GM10248 (cell line): ENCODE measurements at regions of chr1 and their contacts with region 1.

Region 1: GRCh38 chr1:39919545-39919944 is 17.8 kb upstream of the MYCL start:
- DNase-seq: peak; percentile 87
- CTCF ChIP-seq: peak; percentile 58

Region 2: GRCh38 chr1:39816415-39817090 is 103.0 kb before region 1 on chr1:
- CTCF ChIA-PET with region 1: interaction called, 13 read pairs
- POLR2A ChIA-PET with region 1: no interaction called
- DNase-seq: peak; percentile 79
- CTCF ChIP-seq: peak; percentile 67

Region 3: DNA sequence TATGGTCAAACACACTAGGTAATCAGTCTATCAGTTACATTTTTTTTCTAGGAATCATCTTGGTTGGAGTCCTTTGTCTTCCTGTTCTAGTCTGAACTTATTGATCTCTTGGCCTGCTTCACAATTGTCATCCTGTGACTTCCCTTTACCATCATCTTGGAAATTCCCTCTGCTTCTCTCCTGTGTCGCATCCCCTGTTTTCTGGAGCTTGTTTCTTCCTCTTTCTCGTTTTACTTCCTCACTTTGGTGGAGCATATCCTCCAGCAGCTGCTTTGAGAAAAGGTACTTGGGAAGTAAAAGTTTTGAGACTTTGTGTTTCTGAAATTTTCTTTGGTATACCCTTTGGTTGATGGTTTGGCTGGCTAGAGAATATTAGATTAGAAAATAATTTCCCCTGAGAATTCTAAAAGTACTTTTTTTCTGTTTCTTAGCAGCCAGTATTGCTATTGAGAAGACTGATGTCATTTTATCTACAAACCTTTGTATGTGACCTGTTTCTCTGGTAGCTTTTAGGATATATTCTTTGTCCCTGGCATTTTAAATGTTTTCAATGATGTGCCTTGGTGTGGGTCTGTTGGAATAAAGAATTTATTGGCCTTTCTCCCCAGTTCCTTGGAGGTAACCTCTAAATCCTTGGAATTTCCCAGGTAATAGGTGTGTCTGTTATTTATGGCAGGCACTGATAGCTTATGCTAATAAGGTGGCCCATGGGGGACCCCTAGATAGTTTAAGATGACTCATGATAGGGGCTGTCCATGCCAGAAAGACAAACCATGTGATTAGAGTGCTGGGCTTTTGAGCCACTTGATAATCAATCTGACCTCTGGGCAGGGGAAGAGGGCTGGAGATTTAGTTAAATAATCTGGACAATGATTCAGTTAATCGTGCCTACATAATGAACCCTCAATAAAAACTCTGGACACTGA is 11.8 kb before region 1 on chr1:
- CTCF ChIA-PET with region 1: interaction called, 87 read pairs
- POLR2A ChIA-PET with region 1: no interaction called
- DNase-seq: no peak
- CTCF ChIP-seq: no peak

Region 4: DNA sequence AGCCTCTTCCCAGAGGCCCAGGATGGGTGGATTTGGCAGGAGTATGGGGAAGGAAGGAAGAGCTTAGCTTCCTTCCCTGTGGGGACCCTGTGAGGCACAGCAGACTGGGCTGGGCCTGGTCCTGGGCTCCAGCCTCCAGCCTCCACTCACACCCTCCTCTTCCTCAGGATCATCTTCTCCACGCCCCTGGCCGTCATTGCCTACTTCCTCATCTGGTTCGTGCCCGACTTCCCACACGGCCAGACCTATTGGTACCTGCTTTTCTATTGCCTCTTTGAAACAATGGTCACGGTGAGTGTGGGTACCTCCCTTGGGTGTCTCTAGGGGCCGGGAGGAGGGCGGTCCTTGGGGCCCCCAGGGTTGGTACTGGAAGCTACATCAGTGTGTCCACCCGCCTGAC is 45.5 kb after region 1 on chr1:
- CTCF ChIA-PET with region 1: interaction called, 159 read pairs
- POLR2A ChIA-PET with region 1: no interaction called
- DNase-seq: no peak
- CTCF ChIP-seq: no peak

Region 5: GRCh38 chr1:40020447-40021085 is 101.0 kb after region 1 on chr1:
- CTCF ChIA-PET with region 1: interaction called, 13 read pairs
- POLR2A ChIA-PET with region 1: no interaction called
- DNase-seq: peak; percentile 25
- CTCF ChIP-seq: no peak